Panc1 (cell line): ENCODE measurements at regions of chr17 and their contacts with region 1.

Region 1: GRCh38 chr17:28726226-28727130 is at the start of gene TLCD1:
- DNase-seq: no peak
- ATAC-seq: peak; percentile 65
- H3K4me3 ChIP-seq: peak within 1 kb of the TSS; percentile 69 to 96
- H3K27ac ChIP-seq: peak within 1 kb of the TSS; percentile 99
- H3K4me1 ChIP-seq: peaks cover 41% of the 10 kb centered on the region
- H3K27me3 ChIP-seq: no peaks in the 10 kb centered on the region
- CTCF ChIP-seq: peak; percentile 99
- total RNA-seq, gene TLCD1: 55.7 TPM

Region 2: GRCh38 chr17:28644985-28645939 is 81.2 kb before region 1 on chr17 and contains the start of gene BLTP2:
- CTCF ChIA-PET with region 1: interaction called, 10 read pairs
- POLR2A ChIA-PET with region 1: no interaction called
- in situ Hi-C with region 1: no loop called
- intact Hi-C with region 1: no loop called
- DNase-seq: peak; percentile 65
- ATAC-seq: peak; percentile 98
- H3K4me3 ChIP-seq: peak within 1 kb of the TSS; percentile 90 to 97
- H3K27ac ChIP-seq: peak within 1 kb of the TSS; percentile 96
- H3K4me1 ChIP-seq: peaks cover 28% of the 10 kb centered on the region
- H3K27me3 ChIP-seq: no peaks in the 10 kb centered on the region
- CTCF ChIP-seq: no peak
- total RNA-seq, gene BLTP2: 271 TPM

Region 3: DNA sequence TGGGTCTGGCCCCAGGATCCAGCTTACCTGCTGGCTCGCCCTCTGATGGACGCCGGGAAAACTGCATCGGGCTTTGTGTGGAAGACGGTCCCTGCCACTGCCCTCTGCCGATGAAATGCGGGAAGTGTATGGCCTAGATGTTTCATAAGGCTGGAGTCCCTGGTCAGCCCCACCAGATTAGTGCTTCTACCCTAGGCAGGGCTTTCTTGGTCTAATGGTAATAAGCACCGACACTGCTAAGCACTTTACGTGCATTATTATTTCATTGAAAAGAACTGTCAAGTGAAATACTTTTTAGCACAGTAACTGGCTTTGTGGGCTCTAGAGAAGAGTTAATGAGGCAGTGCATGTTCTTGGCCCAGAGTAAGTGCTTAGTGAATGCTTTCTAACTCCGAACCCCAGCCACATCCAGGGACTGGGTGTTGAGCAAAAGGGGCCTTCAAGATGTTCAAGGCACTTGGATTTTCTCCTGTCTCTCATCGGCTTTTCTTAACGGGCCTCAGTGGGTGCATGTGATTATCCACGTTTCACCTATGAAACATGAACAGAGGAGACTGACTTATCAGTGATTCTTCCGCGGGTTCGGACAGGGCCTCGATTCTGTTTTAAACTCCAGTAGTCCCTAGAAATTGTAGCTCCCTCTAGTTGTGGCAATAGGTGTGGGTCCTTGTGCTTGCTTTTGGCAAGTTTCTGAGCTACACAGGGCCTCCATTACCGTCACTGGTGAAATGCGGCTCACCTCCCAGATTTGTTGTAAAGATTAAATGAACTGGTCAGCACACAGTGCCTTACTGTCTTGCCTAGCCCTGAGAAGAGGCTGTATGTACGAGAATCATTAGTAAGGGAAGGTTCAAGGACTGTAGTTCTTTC is 23.9 kb after region 1 on chr17:
- CTCF ChIA-PET with region 1: interaction called, 123 read pairs
- POLR2A ChIA-PET with region 1: interaction called, 25 read pairs
- in situ Hi-C with region 1: no loop called
- intact Hi-C with region 1: loop called (anchors 1 kb)
- DNase-seq: peak; percentile 81
- ATAC-seq: peak; percentile 72
- H3K4me3 ChIP-seq: no peak overlapping the region
- H3K27ac ChIP-seq: peak overlapping the region; percentile 99; the same call in 1 of the 2 replicates
- H3K4me1 ChIP-seq: peaks cover 51% of the 10 kb centered on the region
- H3K27me3 ChIP-seq: no peaks in the 10 kb centered on the region
- CTCF ChIP-seq: peak; percentile 100

Region 4: GRCh38 chr17:28788100-28788499 is 61.6 kb after region 1 on chr17:
- CTCF ChIA-PET with region 1: no interaction called
- POLR2A ChIA-PET with region 1: interaction called, 11 read pairs
- in situ Hi-C with region 1: no loop called
- intact Hi-C with region 1: no loop called
- DNase-seq: no peak
- ATAC-seq: no peak
- H3K4me3 ChIP-seq: no peak overlapping the region
- H3K27ac ChIP-seq: no peak overlapping the region
- H3K4me1 ChIP-seq: no peaks in the 10 kb centered on the region
- H3K27me3 ChIP-seq: no peaks in the 10 kb centered on the region
- CTCF ChIP-seq: no peak

Region 5: GRCh38 chr17:28902819-28903545 is 176.5 kb after region 1 on chr17 and contains the start of gene DHRS13:
- CTCF ChIA-PET with region 1: interaction called, 6 read pairs
- POLR2A ChIA-PET with region 1: no interaction called
- in situ Hi-C with region 1: no loop called
- intact Hi-C with region 1: loop called (anchors 10 kb)
- DNase-seq: peak; percentile 57
- ATAC-seq: peak; percentile 97
- H3K4me3 ChIP-seq: peak within 1 kb of the TSS; percentile 62 to 63
- H3K27ac ChIP-seq: peak within 1 kb of the TSS; percentile 48
- H3K4me1 ChIP-seq: peaks cover 7% of the 10 kb centered on the region
- H3K27me3 ChIP-seq: no peaks in the 10 kb centered on the region
- CTCF ChIP-seq: peak; percentile 100
- total RNA-seq, gene DHRS13: 5.2 TPM